ENCODE measurements at regions of chr6 and their contacts with region 1.

Region 1: GRCh38 chr6:37207903-37208456 is 38.0 kb downstream of the PIM1 start:
- H3K4me3 ChIP-seq: no peak overlapping the region
- H3K27ac ChIP-seq: no peak overlapping the region
- H3K4me1 ChIP-seq: peaks cover 2% of the 10 kb centered on the region
- CTCF ChIP-seq: peak; percentile 85

Region 2: DNA sequence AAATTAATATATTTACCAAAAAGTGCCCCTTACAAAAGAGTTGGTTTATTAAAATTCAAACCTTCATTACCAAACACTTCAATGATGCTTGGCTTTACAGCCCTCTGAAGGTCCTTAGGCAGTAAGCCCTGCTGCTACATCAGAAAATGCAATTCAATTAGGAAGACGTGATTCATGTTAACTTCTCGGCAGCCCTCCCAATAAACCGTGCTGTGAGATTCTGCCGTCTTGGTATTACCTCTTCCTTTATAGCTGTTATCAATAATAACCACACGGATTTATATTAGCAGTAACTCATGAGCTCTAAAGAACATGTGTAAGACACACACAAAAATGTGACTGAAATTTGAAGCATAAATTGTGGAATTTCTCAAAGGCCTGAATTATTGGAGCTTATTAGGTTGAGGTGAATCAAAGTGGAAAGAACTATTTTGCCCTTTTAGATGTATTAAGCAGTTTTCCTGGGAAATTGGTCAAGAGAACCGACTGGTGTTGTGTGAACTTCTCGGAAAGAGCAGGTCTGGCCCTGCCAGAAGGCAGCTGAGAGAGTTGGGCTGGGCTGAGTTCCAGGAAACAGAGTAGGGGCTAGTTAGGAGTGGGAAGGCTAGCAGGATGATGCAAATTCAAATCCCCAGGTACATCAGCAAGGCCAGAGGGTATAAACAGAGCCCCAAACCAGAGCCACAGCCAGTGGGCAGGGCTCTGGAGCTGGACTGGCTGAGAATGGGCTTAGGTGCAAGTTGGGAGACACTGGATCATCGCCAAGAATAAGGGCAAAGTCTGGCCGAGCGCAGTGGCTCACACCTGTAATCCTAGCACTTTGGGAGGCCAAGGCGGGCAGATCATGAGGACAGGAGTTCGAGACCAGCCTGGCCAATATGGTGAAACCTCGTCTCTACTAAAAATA is 169.4 kb before region 1 on chr6:
- CTCF ChIA-PET with region 1: interaction called, 11 read pairs
- POLR2A ChIA-PET with region 1: no interaction called
- H3K4me3 ChIP-seq: no peak overlapping the region
- H3K27ac ChIP-seq: no peak overlapping the region
- H3K4me1 ChIP-seq: no peaks in the 10 kb centered on the region
- CTCF ChIP-seq: no peak

Region 3: DNA sequence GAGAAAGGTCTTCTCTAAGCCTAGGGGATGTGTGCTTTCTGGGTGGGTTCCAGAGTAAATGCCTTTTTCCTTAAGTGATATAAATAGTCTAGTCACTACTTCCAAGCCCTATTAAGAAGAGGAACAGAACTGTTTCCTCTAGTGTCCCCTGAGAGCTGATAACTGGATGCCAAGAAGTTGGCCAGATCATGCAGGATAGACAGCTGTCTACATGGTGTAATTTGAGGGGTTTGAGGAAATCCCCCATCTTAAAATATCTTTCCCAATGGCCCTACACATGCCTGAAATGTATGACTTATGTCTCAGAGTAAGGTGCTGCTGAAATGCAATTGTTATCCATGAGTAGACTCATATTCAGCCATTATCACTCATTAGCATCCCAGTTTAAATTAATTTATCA is 58.2 kb before region 1 on chr6:
- CTCF ChIA-PET with region 1: no interaction called
- POLR2A ChIA-PET with region 1: no interaction called
- H3K4me3 ChIP-seq: no peak overlapping the region
- H3K27ac ChIP-seq: no peak overlapping the region
- H3K4me1 ChIP-seq: no peaks in the 10 kb centered on the region
- CTCF ChIP-seq: no peak

Region 4: GRCh38 chr6:37169496-37170272 is 38.3 kb before region 1 on chr6 and contains the start of gene PIM1:
- CTCF ChIA-PET with region 1: interaction called, 70 read pairs
- POLR2A ChIA-PET with region 1: interaction called, 13 read pairs
- H3K4me3 ChIP-seq: peak within 1 kb of the TSS; percentile 97
- H3K27ac ChIP-seq: peak within 1 kb of the TSS; percentile 94
- H3K4me1 ChIP-seq: peaks cover 3% of the 10 kb centered on the region
- CTCF ChIP-seq: no peak

Region 5: DNA sequence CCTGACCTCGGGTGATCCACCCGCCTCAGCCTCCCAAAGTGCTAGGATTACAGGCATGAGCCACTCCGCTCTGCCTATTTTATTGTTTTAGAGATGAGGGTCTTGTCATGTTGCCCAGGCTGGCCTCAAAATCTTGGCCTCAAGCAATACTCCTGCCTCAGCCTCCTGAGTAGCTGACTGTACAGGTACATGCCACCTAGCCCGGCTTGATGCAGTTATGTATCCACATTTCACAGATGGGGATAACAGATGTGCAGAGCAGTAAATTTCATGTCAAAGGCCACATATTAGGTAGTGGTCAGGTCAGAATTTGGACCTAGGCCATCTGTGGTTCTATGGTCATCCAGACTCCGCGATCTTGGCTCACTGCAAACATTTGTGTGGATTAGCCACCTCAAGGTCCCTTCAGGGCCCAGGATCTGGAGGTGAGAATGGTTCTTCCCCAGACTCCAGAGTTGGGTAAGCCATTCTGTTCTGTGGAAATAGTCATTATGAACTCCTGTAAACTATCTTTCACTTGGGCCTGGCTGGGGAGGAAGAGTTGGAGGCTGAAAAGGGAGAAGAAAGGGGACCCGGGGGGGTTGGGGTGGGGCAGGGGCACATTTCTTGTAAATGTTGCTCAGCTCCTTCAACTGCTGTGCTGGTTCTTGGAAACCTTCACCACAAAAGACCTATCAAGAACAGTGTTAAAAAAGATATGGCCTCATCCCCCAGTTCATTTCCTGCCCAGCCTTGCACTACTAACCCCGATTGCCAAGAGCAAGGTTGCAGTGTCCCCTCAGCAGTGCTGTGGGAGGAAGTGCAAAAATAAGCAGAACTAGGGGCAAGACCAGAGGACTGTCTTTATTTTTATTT is 25.0 kb before region 1 on chr6:
- CTCF ChIA-PET with region 1: interaction called, 47 read pairs
- POLR2A ChIA-PET with region 1: no interaction called
- H3K4me3 ChIP-seq: no peak overlapping the region
- H3K27ac ChIP-seq: no peak overlapping the region
- H3K4me1 ChIP-seq: no peaks in the 10 kb centered on the region
- CTCF ChIP-seq: no peak

Region 6: GRCh38 chr6:37222125-37222967 is 14.4 kb after region 1 on chr6:
- CTCF ChIA-PET with region 1: interaction called, 41 read pairs
- POLR2A ChIA-PET with region 1: interaction called, 3 read pairs
- H3K4me3 ChIP-seq: peak overlapping the region; percentile 64
- H3K27ac ChIP-seq: peak overlapping the region; percentile 68; the same call in 1 of the 2 replicates
- H3K4me1 ChIP-seq: peaks cover 6% of the 10 kb centered on the region
- CTCF ChIP-seq: no peak; the same call in 1 of the 2 replicates

Region 7: DNA sequence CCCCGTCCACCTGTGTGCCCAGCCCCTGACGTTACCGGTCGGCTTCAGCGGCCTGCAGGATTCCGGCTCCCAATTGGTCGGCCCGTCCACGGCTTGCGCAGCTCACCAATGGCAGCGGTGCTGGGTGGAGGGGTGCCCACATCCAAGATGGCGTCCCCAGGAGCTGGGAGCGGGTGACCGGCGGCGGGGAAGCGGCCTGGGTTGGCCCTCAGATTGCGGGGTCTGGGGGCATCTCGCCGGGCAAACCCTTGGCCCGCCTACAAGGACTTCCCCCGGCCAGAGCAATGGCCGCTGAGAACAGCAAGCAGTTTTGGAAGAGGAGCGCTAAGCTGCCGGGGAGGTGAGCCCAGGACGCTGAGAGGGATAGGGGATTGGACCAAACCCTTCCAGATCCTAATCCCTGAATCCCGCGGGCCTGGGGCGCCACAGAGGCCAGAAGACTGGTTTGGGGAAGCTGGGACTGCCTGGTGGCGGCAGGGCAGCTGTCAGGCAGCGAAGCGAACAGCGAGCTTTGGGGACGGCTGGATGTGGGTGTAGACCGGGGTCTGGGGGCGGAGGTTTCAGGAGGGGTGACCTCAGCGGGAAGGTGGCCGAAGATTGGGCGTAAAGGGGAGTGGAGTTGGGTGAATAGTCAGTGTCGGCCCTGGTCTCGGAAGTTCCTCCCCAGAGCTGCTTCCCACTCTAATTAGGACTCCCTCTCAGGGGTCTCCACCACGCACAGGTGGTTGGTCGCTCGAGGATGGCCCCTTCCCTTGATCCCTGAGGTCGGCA is 49.8 kb after region 1 on chr6 and contains the starts of genes TBC1D22B and TMEM217:
- CTCF ChIA-PET with region 1: interaction called, 12 read pairs
- POLR2A ChIA-PET with region 1: interaction called, 5 read pairs
- H3K4me3 ChIP-seq: peak within 1 kb of the TSS; percentile 66
- H3K27ac ChIP-seq: peak within 1 kb of the TSS; percentile 85
- H3K4me1 ChIP-seq: peaks cover 4% of the 10 kb centered on the region; the same call in 1 of the 2 replicates
- CTCF ChIP-seq: peak; percentile 53; the same call in 1 of the 2 replicates

Region 8: DNA sequence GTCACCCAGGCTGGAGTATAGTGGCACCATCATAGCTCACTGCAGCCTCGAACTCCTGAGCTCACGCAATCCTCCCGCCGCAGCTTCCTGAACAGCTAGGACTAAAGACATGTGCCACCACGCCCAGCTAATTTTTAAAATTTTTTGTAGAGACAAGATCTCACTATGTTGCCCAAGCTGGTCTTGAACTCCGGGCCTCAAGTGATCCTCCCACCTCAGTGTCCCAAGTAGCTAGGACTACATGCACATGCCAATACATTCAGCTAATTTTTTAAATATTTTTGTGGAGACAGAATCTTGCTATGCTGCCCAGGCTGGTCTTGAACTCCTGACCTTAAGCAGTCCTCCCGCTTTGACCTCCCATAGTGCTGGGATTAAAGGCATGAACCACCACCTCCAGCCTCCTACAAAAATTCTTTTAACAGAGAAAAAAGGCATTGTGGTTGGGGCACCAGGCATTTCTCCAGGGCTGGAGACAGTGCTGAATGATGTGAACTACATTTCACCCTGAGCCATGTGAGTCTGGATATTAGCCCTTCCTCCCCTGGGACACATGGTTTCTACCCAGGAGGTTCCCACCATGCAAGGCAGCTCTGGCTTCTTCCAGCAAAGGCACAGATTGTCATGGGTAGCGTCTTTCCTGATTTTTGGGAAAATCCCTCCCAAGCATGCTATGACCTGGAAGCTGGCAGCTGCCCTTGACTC is 188.6 kb after region 1 on chr6:
- CTCF ChIA-PET with region 1: no interaction called
- POLR2A ChIA-PET with region 1: no interaction called
- H3K4me3 ChIP-seq: no peak overlapping the region
- H3K27ac ChIP-seq: no peak overlapping the region
- H3K4me1 ChIP-seq: no peaks in the 10 kb centered on the region
- CTCF ChIP-seq: no peak

Region 9: GRCh38 chr6:37679539-37680476 is 471.8 kb after region 1 on chr6:
- CTCF ChIA-PET with region 1: no interaction called
- POLR2A ChIA-PET with region 1: no interaction called
- H3K4me3 ChIP-seq: no peak overlapping the region
- H3K27ac ChIP-seq: no peak overlapping the region
- H3K4me1 ChIP-seq: no peaks in the 10 kb centered on the region; the same call in 1 of the 2 replicates
- CTCF ChIP-seq: no peak

Measured in HEK293 (cell line).